BJ (cell line): ENCODE measurements at regions of chr15 and their contacts with region 1.

Region 1: GRCh38 chr15:63630036-63630751 is 33.0 kb downstream of the FBXL22 start:
- DNase-seq: no peak
- H3K4me3 ChIP-seq: no peak overlapping the region
- H3K27me3 ChIP-seq: no peaks in the 10 kb centered on the region
- CTCF ChIP-seq: no peak

Region 2: DNA sequence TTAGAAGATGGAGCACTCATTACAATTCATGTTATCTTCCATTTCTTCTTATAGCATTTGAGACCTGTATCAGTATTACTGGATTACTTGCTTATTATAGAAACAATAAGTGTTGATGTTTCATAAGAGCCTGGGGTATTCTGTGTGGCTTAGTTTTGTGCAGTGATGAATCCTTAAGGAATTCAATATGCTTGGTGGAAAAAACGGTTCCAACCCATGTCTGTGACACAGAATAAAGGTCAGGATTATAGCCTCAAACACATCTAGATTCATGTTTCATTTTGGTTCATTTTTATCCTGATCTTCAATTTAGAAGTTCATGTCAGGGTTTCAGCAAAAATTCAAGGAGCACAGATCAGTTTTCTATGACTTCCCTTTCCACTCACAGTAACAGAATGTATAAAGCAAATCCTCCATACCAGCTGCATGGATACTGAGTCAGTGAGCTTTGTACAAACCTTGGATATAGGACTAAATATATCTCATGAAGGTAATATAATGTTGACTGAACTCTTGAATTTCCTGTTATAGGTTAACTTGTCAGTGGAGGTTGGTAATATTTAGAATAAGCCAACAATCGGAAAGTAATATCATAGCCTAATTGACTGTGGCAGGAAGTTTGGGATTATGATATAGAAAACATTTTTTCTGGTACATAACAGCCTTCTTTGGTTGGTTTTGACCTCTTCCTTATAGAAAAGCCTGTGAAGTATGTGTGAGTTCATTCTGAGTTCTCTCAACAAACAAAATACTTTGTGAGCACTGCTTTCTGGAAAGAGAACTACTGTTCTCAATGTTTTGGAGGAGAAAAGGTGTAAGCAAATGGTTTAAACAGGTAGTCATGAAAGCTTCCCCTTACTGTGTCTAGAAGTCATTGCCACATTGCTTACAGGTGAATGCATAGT is 805.8 kb before region 1 on chr15:
- CTCF ChIA-PET with region 1: no interaction called
- POLR2A ChIA-PET with region 1: no interaction called
- DNase-seq: no peak
- H3K4me3 ChIP-seq: no peak overlapping the region
- H3K27me3 ChIP-seq: no peaks in the 10 kb centered on the region
- CTCF ChIP-seq: no peak

Region 3: DNA sequence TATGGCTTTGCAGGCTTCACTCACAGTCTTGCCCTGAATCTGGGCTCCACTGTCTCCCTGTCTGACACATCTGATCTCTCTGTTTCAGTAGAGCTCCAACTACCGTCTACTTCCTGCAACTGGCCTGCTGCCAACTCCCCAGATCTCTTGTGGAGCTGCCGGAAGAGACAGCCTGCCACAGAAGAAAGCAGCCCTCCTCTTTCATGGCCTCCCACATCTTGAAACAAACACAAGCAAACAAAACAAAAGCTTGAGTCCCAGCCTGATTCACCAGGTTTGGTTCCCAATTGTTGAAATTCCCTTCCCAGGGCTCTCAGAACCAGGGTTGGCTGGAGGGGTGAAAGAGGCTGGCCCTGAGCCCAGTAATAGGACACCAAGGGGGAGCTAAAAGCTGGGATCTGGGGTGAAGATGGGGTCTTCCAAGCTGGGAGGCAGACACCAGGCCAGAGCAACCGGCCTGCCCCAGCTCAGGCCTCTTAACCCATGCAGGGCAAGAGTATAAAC is 193.3 kb before region 1 on chr15:
- CTCF ChIA-PET with region 1: no interaction called
- POLR2A ChIA-PET with region 1: no interaction called
- DNase-seq: no peak
- H3K4me3 ChIP-seq: no peak overlapping the region
- H3K27me3 ChIP-seq: no peaks in the 10 kb centered on the region
- CTCF ChIP-seq: no peak

Region 4: DNA sequence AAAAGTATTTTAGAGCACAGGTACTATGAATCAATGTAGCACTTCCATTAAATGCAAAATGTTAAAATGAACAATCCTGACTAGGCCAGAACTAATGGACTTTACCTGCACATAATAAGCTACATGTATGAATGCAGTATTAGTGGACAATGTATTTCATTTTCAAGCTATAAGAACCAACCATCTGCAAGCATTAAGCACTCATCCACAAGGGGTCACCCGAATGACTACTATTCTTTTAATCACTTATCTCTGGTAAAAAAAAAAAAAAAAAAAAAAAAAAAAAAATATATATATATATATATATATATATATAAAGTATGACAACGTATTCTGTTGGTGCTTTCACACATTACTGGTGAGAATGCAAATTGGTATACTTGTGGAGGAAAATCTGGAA is 196.3 kb after region 1 on chr15:
- CTCF ChIA-PET with region 1: no interaction called
- POLR2A ChIA-PET with region 1: interaction called, 10 read pairs
- DNase-seq: no peak
- H3K4me3 ChIP-seq: no peak overlapping the region
- H3K27me3 ChIP-seq: no peaks in the 10 kb centered on the region
- CTCF ChIP-seq: peak; percentile 19; the same call in 1 of the 2 replicates

Region 5: GRCh38 chr15:63881431-63881830 is 251.2 kb after region 1 on chr15:
- CTCF ChIA-PET with region 1: no interaction called
- POLR2A ChIA-PET with region 1: no interaction called
- DNase-seq: no peak
- H3K4me3 ChIP-seq: no peak overlapping the region
- H3K27me3 ChIP-seq: no peaks in the 10 kb centered on the region
- CTCF ChIP-seq: no peak